ENCODE measurements at regions of chr12 and their contacts with region 1.

Region 1: GRCh38 chr12:66275040-66275439 is 27.3 kb upstream of the HELB start:
- DNase-seq: no peak
- H3K4me3 Mint-ChIP-seq: no peak overlapping the region
- H3K27ac Mint-ChIP-seq: no peak overlapping the region
- H3K4me1 Mint-ChIP-seq: peaks cover 26% of the 10 kb centered on the region
- H3K27me3 Mint-ChIP-seq: no peaks in the 10 kb centered on the region

Region 2: GRCh38 chr12:66288121-66288520 is 13.1 kb after region 1 on chr12:
- intact Hi-C with region 1: loop called (anchors 2 kb)
- DNase-seq: peak; percentile 67
- H3K4me3 Mint-ChIP-seq: no peak overlapping the region
- H3K27ac Mint-ChIP-seq: peak overlapping the region; percentile 48
- H3K4me1 Mint-ChIP-seq: peaks cover 61% of the 10 kb centered on the region
- H3K27me3 Mint-ChIP-seq: no peaks in the 10 kb centered on the region

Measured in activated T-helper 2 cell treated with anti-CD3 and anti-CD28 coated beads, Interferon-gamma antibody, Interleukin-2, Interleukin-4, amounts not matched to agents 10 μg/mL and 5 μg/mL and 100 μg/mL, durations not matched to agents 14 hours and 24 hours and 36 hours (primary cell).